MCF 10A (cell line): ENCODE measurements at regions of chr6 and their contacts with region 1.

Region 1: DNA sequence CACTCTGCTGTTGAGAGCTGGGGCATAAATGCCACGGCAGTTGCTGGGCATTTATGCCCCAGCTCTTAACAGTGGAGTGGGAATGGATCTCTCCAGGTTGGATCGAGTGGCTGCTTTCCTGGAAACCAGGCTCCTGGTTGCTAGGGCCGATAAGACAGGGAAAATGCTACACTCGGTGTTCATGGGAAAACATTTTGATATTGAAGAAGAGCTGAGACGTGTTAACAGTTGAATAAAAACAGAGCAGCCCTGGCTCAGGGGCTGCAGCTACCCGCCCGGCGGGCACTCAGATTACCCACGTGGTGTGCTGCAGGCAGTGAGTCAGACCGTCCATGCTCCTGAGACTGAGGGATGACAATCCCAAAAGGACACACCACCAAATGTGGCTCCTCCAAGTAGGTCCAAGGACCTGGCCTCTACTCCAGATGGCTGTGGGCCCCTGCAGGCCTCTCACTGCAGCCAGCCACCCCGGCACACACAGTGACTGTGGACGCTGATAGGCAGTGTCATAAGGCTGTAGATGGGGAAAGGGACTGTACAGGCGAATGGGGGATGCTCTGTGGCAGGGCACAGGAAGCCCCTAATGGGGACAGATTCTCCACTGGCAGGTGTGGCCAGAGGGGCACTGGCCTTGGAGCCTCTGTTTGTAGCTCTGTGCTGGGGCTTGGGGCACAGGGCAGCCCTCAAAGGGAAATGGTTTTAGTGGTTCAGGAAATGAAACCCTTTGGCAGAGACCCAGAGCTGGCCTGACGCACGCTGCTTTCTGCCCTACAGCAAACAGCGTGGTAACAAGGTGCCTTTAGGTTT is 237.8 kb downstream of the LY86 start:
- DNase-seq: peak; percentile 81
- H3K4me3 Mint-ChIP-seq: no peak overlapping the region
- H3K27ac Mint-ChIP-seq: peak overlapping the region; percentile 92
- H3K4me1 Mint-ChIP-seq: peaks cover 40% of the 10 kb centered on the region
- H3K27me3 Mint-ChIP-seq: no peaks in the 10 kb centered on the region
- CTCF ChIP-seq: no peak

Region 2: GRCh38 chr6:6515691-6516607 is 310.3 kb before region 1 on chr6:
- CTCF ChIA-PET with region 1: no interaction called
- POLR2A ChIA-PET with region 1: no interaction called
- intact Hi-C with region 1: no loop called
- DNase-seq: no peak
- H3K4me3 Mint-ChIP-seq: no peak overlapping the region
- H3K27ac Mint-ChIP-seq: no peak overlapping the region
- H3K4me1 Mint-ChIP-seq: peaks cover 5% of the 10 kb centered on the region
- H3K27me3 Mint-ChIP-seq: peaks cover 84% of the 10 kb centered on the region
- CTCF ChIP-seq: no peak

Region 3: DNA sequence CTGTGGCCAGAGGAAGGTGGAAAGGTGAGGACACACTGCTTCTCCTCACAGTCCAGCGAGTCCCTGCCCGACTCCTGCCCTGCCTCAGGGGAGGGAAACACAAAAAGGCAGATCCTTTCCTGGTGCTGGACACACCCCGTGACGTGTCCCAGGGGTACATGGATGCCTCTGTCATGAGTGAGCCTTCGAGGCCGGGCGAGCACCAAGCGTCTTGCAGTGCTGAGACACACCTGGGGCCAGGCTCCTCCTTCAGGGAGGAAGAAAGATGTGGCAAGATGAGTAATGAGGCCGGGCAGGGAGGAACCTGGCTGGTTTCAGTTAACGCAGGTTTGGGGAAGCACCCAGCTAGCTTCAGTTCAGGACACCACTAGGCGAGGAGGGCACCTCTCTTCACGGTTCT is 22.7 kb before region 1 on chr6:
- CTCF ChIA-PET with region 1: interaction called, 7 read pairs
- POLR2A ChIA-PET with region 1: interaction called, 19 read pairs
- intact Hi-C with region 1: no loop called
- DNase-seq: peak; percentile 98
- H3K4me3 Mint-ChIP-seq: peak overlapping the region; percentile 27
- H3K27ac Mint-ChIP-seq: peak overlapping the region; percentile 84
- H3K4me1 Mint-ChIP-seq: peaks cover 39% of the 10 kb centered on the region
- H3K27me3 Mint-ChIP-seq: no peaks in the 10 kb centered on the region
- CTCF ChIP-seq: no peak

Region 4: GRCh38 chr6:6811151-6812002 is 14.9 kb before region 1 on chr6:
- CTCF ChIA-PET with region 1: interaction called, 7 read pairs
- POLR2A ChIA-PET with region 1: interaction called, 30 read pairs
- intact Hi-C with region 1: no loop called
- DNase-seq: peak; percentile 98
- H3K4me3 Mint-ChIP-seq: peak overlapping the region; percentile 48
- H3K27ac Mint-ChIP-seq: peak overlapping the region; percentile 80
- H3K4me1 Mint-ChIP-seq: peaks cover 28% of the 10 kb centered on the region
- H3K27me3 Mint-ChIP-seq: no peaks in the 10 kb centered on the region
- CTCF ChIP-seq: no peak

Region 5: DNA sequence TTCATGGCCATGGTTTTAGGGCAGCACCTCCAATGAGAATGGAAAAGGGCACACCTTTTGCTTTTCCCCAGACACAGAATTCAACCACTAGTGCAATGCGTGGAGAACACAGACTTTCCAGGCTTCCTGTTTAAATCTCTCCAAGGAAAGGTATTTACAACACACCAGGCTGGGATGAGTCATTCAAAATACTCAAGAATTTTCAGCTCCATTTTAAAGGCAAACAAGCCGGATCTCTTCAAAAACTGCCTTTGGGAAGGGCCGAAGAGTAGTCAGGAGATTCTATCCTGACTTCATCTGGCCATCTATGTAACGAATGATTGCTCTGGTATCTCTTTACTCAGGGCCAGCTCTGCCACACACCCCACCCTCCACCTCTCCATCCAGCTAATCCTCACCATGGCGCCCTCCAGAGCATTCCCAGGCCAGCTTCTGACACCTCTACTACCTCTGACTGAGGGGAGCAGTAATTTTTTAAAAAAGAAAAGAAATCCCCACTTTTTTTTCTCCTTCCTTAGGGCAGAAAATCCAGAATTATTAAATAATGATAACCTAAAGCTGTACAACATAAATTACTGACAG is 16.9 kb after region 1 on chr6:
- CTCF ChIA-PET with region 1: interaction called, 5 read pairs
- POLR2A ChIA-PET with region 1: interaction called, 21 read pairs
- intact Hi-C with region 1: no loop called
- DNase-seq: peak; percentile 53
- H3K4me3 Mint-ChIP-seq: no peak overlapping the region
- H3K27ac Mint-ChIP-seq: peak overlapping the region; percentile 61
- H3K4me1 Mint-ChIP-seq: peaks cover 33% of the 10 kb centered on the region
- H3K27me3 Mint-ChIP-seq: no peaks in the 10 kb centered on the region
- CTCF ChIP-seq: no peak

Region 6: GRCh38 chr6:6851059-6851948 is 25.0 kb after region 1 on chr6:
- CTCF ChIA-PET with region 1: interaction called, 6 read pairs
- POLR2A ChIA-PET with region 1: interaction called, 24 read pairs
- intact Hi-C with region 1: no loop called
- DNase-seq: peak; percentile 95
- H3K4me3 Mint-ChIP-seq: peak overlapping the region; percentile 20
- H3K27ac Mint-ChIP-seq: peak overlapping the region; percentile 83
- H3K4me1 Mint-ChIP-seq: peaks cover 17% of the 10 kb centered on the region
- H3K27me3 Mint-ChIP-seq: no peaks in the 10 kb centered on the region
- CTCF ChIP-seq: no peak

Region 7: GRCh38 chr6:7058250-7058923 is 232.1 kb after region 1 on chr6:
- CTCF ChIA-PET with region 1: interaction called, 3 read pairs
- POLR2A ChIA-PET with region 1: interaction called, 11 read pairs
- intact Hi-C with region 1: no loop called
- DNase-seq: peak; percentile 99
- H3K4me3 Mint-ChIP-seq: peak overlapping the region; percentile 44
- H3K27ac Mint-ChIP-seq: peak overlapping the region; percentile 91
- H3K4me1 Mint-ChIP-seq: peaks cover 30% of the 10 kb centered on the region
- H3K27me3 Mint-ChIP-seq: no peaks in the 10 kb centered on the region
- CTCF ChIP-seq: no peak